Activated B cell treated with CpG ODN at 0.5 μM for 24 hours (primary cell): ENCODE measurements at regions of chr14 and their contacts with region 1.

Region 1: GRCh38 chr14:90697577-90698206 is 118.5 kb downstream of the TTC7B start:
- DNase-seq: peak; percentile 37
- ATAC-seq: peak; percentile 75
- H3K4me3 Mint-ChIP-seq: no peak overlapping the region
- H3K27ac Mint-ChIP-seq: no peak overlapping the region
- H3K4me1 Mint-ChIP-seq: peaks cover 4% of the 10 kb centered on the region
- H3K27me3 Mint-ChIP-seq: peaks cover under 1% of the 10 kb centered on the region
- CTCF ChIP-seq: peak; percentile 76

Region 2: DNA sequence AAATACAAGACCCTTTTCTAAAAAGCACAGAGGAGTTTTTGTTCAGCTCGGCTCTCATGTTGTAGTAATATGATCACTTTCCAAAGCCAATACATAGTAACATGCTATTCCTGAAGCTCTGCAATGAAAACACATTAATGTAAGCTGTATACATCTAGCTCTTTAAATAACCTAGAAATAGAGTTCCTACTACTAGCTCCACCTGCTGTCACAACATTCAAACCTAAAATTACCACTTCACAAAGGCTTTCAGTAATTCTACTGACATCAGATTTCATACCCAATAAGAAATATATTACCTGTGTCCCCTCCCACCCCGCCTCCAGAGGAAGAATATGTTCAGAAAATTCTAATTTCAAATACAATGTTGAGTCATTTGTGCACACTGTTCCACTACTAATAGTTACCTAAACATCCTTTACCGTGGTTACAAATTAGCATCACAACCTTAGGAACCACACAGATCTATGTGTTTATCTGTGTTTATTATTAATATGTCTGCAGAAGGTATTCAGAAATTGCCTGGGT is 761.0 kb before region 1 on chr14:
- CTCF ChIA-PET with region 1: interaction called, 3 read pairs
- POLR2A ChIA-PET with region 1: no interaction called
- intact Hi-C with region 1: loop called (anchors 1 kb)
- DNase-seq: no peak
- ATAC-seq: no peak
- H3K4me3 Mint-ChIP-seq: no peak overlapping the region
- H3K27ac Mint-ChIP-seq: no peak overlapping the region
- H3K4me1 Mint-ChIP-seq: no peaks in the 10 kb centered on the region
- H3K27me3 Mint-ChIP-seq: no peaks in the 10 kb centered on the region
- CTCF ChIP-seq: no peak

Region 3: GRCh38 chr14:89973234-89973823 is 724.4 kb before region 1 on chr14:
- CTCF ChIA-PET with region 1: interaction called, 14 read pairs
- POLR2A ChIA-PET with region 1: no interaction called
- intact Hi-C with region 1: loop called (anchors 1 kb)
- DNase-seq: no peak
- ATAC-seq: peak; percentile 60
- H3K4me3 Mint-ChIP-seq: no peak overlapping the region
- H3K27ac Mint-ChIP-seq: no peak overlapping the region
- H3K4me1 Mint-ChIP-seq: no peaks in the 10 kb centered on the region
- H3K27me3 Mint-ChIP-seq: no peaks in the 10 kb centered on the region
- CTCF ChIP-seq: peak; percentile 83

Region 4: DNA sequence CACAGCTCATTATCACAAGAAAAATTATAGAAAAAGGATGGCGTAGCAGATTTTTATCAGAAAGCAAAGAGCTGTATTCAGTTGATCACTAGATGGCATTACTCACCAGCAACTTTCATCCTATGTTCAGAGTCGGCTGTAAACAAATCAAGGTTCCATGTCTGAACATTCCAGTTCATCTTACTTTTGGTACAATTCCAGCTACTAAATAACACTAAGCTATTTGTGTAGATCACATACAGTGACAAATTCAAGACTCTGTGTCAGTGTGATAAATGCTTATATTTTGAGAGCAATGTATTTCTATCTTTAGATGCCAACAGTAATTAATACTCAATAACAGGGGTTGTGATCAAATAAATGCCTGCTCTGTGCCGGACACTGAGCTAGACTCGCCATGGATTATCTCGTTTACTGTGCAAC is 396.0 kb before region 1 on chr14:
- CTCF ChIA-PET with region 1: interaction called, 12 read pairs
- POLR2A ChIA-PET with region 1: no interaction called
- intact Hi-C with region 1: loop called (anchors 1 kb)
- DNase-seq: no peak
- ATAC-seq: no peak
- H3K4me3 Mint-ChIP-seq: no peak overlapping the region
- H3K27ac Mint-ChIP-seq: no peak overlapping the region
- H3K4me1 Mint-ChIP-seq: peaks cover 6% of the 10 kb centered on the region
- H3K27me3 Mint-ChIP-seq: no peaks in the 10 kb centered on the region
- CTCF ChIP-seq: no peak

Region 5: GRCh38 chr14:90368946-90369721 is 328.6 kb before region 1 on chr14:
- CTCF ChIA-PET with region 1: no interaction called
- POLR2A ChIA-PET with region 1: no interaction called
- intact Hi-C with region 1: loop called (anchors 1 kb)
- DNase-seq: no peak
- ATAC-seq: peak; percentile 18
- H3K4me3 Mint-ChIP-seq: no peak overlapping the region
- H3K27ac Mint-ChIP-seq: no peak overlapping the region
- H3K4me1 Mint-ChIP-seq: no peaks in the 10 kb centered on the region
- H3K27me3 Mint-ChIP-seq: peaks cover 10% of the 10 kb centered on the region
- CTCF ChIP-seq: no peak

Region 6: GRCh38 chr14:90677484-90678050 is 20.1 kb before region 1 on chr14:
- CTCF ChIA-PET with region 1: no interaction called
- POLR2A ChIA-PET with region 1: no interaction called
- intact Hi-C with region 1: no loop called
- DNase-seq: no peak
- ATAC-seq: no peak
- H3K4me3 Mint-ChIP-seq: no peak overlapping the region
- H3K27ac Mint-ChIP-seq: no peak overlapping the region
- H3K4me1 Mint-ChIP-seq: no peaks in the 10 kb centered on the region
- H3K27me3 Mint-ChIP-seq: no peaks in the 10 kb centered on the region
- CTCF ChIP-seq: no peak

Region 7: DNA sequence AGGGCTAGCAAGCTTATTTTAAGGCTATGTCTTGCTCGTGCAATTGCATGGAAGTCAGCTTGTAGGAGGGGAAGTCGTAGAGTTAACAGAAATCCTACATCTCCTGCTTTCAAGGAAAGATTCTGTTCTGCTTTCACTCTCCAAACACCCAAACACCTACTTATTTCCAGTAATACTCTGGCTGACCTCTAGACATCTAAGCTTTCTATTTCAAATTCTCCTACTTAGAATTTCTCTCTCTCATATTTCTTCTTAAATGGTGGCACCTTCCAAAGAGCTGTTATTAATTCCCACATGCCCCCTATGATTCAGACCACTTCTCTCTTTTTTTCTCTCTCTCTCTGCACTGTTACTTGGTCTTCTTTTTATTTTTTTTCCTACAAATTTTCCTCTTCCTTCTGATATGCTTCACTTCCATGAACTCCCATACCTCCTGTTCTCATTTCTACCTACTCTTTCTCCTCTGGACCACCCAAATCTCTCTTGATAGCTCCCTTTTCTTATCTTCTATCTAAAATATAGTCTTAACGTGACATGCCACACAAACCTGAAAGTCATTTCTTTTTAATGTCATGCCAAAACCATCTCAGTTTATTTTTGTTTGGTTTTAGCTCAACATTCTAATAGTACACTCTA is 272.0 kb after region 1 on chr14:
- CTCF ChIA-PET with region 1: no interaction called
- POLR2A ChIA-PET with region 1: no interaction called
- intact Hi-C with region 1: no loop called
- DNase-seq: no peak
- ATAC-seq: no peak
- H3K4me3 Mint-ChIP-seq: no peak overlapping the region
- H3K27ac Mint-ChIP-seq: peak overlapping the region; percentile 69
- H3K4me1 Mint-ChIP-seq: peaks cover 7% of the 10 kb centered on the region
- H3K27me3 Mint-ChIP-seq: no peaks in the 10 kb centered on the region
- CTCF ChIP-seq: no peak